ENCODE measurements at regions of chr7 and their contacts with region 1.

Region 1: DNA sequence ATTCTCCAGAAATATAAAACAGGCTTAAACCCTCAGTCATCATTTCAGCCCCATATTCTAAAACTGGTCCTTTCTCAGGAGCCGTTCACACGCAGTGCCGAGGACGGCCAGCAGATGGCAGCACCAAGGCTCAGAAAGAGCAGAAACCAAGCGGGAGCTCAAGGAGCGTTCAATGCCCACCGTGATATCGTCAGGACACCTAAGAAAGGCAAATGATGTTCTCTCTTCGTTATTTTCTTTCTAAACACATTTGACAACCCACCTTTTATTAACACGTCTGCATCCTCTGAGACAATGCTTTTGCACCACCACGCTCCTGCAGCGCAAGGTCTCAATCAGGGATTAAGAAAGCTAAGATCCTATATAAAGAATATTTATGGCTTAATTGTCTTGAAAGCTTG is 45.7 kb upstream of the RBM33 start:
- DNase-seq: peak; percentile 67 to 89 (median 80)
- ATAC-seq: peak; percentile 83
- H3K4me3 ChIP-seq: no peak overlapping the region
- H3K4me3 Mint-ChIP-seq: no peak overlapping the region
- H3K27ac ChIP-seq: no peak overlapping the region
- H3K27ac Mint-ChIP-seq: no peak overlapping the region
- H3K4me1 ChIP-seq: peaks cover 3% of the 10 kb centered on the region
- H3K4me1 Mint-ChIP-seq: no peaks in the 10 kb centered on the region
- H3K27me3 ChIP-seq: peaks cover 5 to 10% of the 10 kb centered on the region in 2 experiments
- H3K27me3 Mint-ChIP-seq: peaks cover 50% of the 10 kb centered on the region
- CTCF ChIP-seq: peak; percentile 95

Region 2: GRCh38 chr7:155733582-155734444 is 135.0 kb after region 1 on chr7:
- CTCF ChIA-PET with region 1: interaction called, 11 read pairs
- POLR2A ChIA-PET with region 1: no interaction called
- intact Hi-C with region 1: loop called (anchors 1 kb)
- DNase-seq: no peak
- ATAC-seq: no peak
- H3K4me3 ChIP-seq: no peak overlapping the region
- H3K4me3 Mint-ChIP-seq: peak overlapping the region; percentile 4
- H3K27ac ChIP-seq: no peak overlapping the region
- H3K27ac Mint-ChIP-seq: peak overlapping the region; percentile 48
- H3K4me1 ChIP-seq: peaks cover 17% of the 10 kb centered on the region
- H3K4me1 Mint-ChIP-seq: peaks cover 80% of the 10 kb centered on the region
- H3K27me3 ChIP-seq: no peaks in the 10 kb centered on the region
- H3K27me3 Mint-ChIP-seq: no peaks in the 10 kb centered on the region
- CTCF ChIP-seq: no peak

Region 3: DNA sequence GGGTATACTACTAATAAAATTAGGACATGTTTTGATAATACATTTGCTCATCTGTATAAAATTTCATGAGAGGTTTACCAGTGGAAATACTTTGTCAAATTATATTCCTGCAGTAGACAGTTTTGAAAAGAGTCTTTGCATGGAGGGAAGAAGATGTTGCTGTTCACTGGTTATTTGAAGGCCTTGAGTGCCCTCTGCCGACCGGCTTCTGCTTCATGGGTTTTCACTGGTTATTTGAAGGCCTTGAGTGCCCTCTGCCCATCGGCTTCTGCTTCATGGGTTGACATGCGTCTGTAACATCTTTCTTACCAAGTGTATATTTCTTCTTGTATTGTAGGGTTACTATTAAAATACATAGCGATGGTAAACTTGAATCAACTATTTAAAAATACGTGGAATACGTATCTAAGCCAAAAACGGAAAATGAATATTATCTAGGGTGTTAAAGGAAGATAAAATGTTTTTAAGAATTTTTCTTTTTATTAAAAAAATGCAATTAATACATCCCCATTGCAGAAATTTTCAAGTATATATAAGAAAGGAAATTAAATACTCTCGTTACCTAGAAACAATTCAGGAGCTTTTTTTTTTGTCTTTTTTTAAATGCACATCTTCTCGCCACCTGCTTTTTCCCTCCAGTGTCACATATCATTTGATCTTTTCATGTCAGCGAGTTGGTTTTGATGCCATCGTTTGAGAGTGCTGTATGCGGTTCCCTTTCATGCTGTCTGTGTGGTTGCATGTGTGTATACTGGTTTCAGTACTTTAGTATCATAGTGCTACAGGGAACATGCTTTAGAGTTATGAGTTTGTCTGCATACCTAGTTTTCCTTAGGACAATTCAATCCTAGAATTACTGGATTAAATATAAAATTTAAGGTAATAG is 140.1 kb after region 1 on chr7:
- CTCF ChIA-PET with region 1: interaction called, 11 read pairs
- POLR2A ChIA-PET with region 1: no interaction called
- intact Hi-C with region 1: loop called (anchors 1 kb)
- DNase-seq: peak; percentile 40 to 80 (median 60)
- ATAC-seq: peak; percentile 93
- H3K4me3 ChIP-seq: no peak overlapping the region
- H3K4me3 Mint-ChIP-seq: peak overlapping the region; percentile 26
- H3K27ac ChIP-seq: no peak overlapping the region
- H3K27ac Mint-ChIP-seq: peak overlapping the region; percentile 64
- H3K4me1 ChIP-seq: peaks cover 10% of the 10 kb centered on the region
- H3K4me1 Mint-ChIP-seq: peaks cover 65% of the 10 kb centered on the region
- H3K27me3 ChIP-seq: no peaks in the 10 kb centered on the region
- H3K27me3 Mint-ChIP-seq: no peaks in the 10 kb centered on the region
- CTCF ChIP-seq: peak; percentile 67

Region 4: DNA sequence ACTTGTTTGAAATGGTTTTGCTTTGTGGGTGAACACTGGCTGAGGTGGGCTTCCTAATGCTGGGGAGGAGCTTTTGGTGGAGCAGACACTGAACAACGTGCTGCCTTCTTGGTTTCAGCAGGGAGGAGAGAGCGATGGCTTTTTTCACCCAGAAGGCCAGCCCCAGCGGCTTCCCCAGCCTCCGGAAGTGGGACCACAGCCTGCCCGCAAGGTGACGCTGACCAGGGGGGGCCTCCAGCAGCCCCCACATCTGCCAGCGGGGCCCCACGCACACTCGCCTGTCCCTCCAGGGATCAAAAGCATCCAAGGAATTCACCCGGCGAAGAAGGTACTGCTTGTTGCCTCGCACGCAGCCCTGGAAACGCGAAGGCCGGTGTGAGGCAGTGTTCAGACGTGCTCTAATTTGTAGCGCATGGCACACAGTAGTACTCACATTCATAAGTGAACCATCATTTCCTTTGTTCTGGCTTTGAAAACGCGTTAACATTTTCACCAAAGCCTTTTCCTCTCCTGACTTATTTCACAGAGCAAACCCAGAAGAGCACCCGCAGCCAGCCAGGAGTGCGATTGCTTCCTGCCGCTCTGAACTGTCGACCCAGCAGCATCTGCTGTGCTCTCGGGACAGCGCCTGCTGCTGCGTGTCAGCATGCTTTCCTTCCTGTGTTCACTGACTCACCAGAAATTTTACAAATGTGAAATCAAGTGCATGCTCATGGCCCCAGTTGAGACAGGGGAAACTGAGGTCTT is 165.1 kb after region 1 on chr7:
- CTCF ChIA-PET with region 1: interaction called, 26 read pairs
- POLR2A ChIA-PET with region 1: interaction called, 3 read pairs
- intact Hi-C with region 1: loop called (anchors 1 kb)
- DNase-seq: peak; percentile 24 to 79 (median 48)
- ATAC-seq: peak; percentile 85
- H3K4me3 ChIP-seq: peak overlapping the region; percentile 18
- H3K4me3 Mint-ChIP-seq: peak overlapping the region; percentile 84
- H3K27ac ChIP-seq: peak overlapping the region; percentile 57 to 67
- H3K27ac Mint-ChIP-seq: peak overlapping the region; percentile 84
- H3K4me1 ChIP-seq: peaks cover 36% of the 10 kb centered on the region
- H3K4me1 Mint-ChIP-seq: peaks cover 57% of the 10 kb centered on the region
- H3K27me3 ChIP-seq: no peaks in the 10 kb centered on the region
- H3K27me3 Mint-ChIP-seq: no peaks in the 10 kb centered on the region
- CTCF ChIP-seq: no peak

Region 5: DNA sequence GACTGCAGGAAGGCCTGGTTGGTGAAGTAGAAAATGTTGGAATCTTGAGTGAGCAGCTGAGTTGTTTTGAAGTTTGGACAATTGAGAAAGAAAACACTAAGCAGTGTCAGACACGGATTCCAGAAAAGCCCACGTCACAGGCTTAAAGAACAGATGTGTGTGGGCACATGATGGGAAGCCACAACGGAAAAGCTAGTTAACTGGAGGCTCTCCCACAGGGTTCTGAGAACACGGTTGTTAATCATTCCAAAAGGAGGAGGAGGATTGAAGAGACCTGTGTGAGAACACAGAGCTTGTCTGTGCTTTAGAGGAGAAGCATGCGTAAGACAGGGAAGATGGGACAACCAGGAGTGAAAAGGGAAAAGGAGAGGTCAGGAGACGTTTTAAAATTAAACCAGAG is 170.9 kb after region 1 on chr7:
- CTCF ChIA-PET with region 1: interaction called, 26 read pairs
- POLR2A ChIA-PET with region 1: interaction called, 3 read pairs
- intact Hi-C with region 1: loop called (anchors 1 kb)
- DNase-seq: no peak
- ATAC-seq: no peak
- H3K4me3 ChIP-seq: no peak overlapping the region
- H3K4me3 Mint-ChIP-seq: no peak overlapping the region
- H3K27ac ChIP-seq: no peak overlapping the region
- H3K27ac Mint-ChIP-seq: no peak overlapping the region
- H3K4me1 ChIP-seq: peaks cover 4% of the 10 kb centered on the region
- H3K4me1 Mint-ChIP-seq: peaks cover 8% of the 10 kb centered on the region
- H3K27me3 ChIP-seq: no peaks in the 10 kb centered on the region
- H3K27me3 Mint-ChIP-seq: no peaks in the 10 kb centered on the region
- CTCF ChIP-seq: no peak